ENCODE measurements at regions of chr2 and their contacts with region 1.

Region 1: DNA sequence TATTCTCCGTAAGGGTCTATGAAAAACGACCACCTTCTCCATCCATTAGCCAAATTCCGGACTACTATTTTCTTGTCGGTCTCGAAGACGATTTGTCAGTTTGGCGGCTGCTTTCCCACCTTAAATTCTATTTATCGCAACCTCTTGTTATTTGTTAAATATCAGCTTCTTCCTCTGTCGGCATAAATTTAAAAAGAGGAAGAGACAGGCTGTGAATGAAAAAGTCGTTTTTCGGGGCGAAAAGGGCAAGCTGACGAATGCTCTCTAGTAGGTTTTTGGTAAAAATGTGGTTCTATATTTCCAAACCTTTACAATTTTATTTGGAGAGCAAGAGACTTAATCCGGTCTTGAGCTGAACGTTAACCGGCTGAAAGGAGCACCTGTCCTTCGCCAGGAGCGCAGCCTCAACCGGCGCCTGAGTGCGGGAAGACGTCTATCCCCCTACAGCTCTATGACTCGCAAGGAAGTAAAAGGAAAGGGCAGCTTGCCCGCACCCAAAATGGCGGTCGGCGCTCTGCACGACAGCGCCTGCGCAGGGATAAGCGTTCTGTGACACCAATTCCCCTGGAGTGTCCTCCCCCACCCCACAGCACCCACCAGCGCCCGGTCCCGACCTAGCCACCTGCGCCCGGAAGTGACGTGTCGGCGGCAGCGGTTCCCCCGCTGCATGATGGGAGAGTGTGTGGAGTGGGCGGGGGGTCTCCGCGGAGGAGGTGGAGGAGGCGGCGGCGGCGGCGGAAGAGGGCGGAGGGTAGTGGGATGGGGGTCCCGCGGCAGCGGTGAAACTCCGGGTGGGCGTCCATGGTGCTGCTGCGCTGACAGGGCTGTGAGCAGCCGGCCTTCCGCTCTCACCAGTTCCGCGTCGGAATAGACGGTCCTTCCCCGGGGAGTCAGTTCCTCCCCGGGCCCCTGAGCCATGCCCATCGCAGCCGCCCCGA is at the start of gene AFTPH:
- DNase-seq: peak; percentile 100
- H3K4me3 Mint-ChIP-seq: peak within 1 kb of the TSS; percentile 99
- H3K27ac Mint-ChIP-seq: peak within 1 kb of the TSS; percentile 100
- H3K4me1 Mint-ChIP-seq: peaks cover 39% of the 10 kb centered on the region
- H3K27me3 Mint-ChIP-seq: peaks cover 2% of the 10 kb centered on the region
- total RNA-seq, gene AFTPH: 42.4 and 43.4 TPM in 2 replicates

Region 2: DNA sequence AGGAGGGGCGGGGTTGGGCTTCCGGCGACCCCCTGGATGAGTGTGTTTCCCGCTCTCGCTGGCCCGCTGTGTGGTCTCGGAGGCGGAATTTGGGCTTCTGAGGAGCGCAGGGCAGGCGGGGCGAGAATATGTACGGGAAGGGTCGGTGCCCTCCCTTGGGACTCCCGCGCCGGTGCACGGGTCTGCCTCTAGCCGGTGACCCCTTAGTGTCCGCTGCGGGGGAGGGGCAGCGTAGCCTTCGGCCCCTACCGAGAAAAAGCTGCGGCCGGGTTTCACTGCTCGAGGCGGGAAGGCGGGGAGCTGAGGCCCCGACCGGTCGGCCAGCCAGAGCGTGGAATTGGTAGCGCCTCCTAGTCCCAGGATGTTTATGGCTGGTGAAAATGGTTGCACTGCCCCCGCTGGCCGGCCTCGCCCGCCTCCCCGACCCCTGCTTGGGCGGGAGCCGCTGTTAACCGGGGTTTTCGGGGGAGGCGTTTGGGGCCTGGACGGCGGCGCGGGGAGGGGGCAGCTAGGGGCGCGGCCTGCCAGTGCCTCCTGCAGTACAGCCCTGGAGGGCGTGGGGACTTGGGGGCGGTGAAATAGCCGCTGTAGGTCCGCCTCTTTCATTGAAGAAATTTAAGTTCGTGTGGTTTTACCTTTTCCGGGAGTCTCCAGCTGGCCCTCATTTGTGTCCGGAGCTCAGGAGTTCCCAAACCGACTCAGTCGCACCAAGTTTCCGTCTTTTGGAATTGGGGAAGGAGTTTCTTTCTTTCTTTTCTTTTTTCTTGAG is 682.5 kb before region 1 on chr2 and contains the start of gene UGP2:
- intact Hi-C with region 1: loop called (anchors 2 kb)
- DNase-seq: peak; percentile 83
- H3K4me3 Mint-ChIP-seq: peak within 1 kb of the TSS; percentile 99
- H3K27ac Mint-ChIP-seq: peak within 1 kb of the TSS; percentile 99
- H3K4me1 Mint-ChIP-seq: peaks cover 47% of the 10 kb centered on the region
- H3K27me3 Mint-ChIP-seq: no peaks in the 10 kb centered on the region
- total RNA-seq, gene UGP2: 60.3 and 65.9 TPM in 2 replicates

Region 3: DNA sequence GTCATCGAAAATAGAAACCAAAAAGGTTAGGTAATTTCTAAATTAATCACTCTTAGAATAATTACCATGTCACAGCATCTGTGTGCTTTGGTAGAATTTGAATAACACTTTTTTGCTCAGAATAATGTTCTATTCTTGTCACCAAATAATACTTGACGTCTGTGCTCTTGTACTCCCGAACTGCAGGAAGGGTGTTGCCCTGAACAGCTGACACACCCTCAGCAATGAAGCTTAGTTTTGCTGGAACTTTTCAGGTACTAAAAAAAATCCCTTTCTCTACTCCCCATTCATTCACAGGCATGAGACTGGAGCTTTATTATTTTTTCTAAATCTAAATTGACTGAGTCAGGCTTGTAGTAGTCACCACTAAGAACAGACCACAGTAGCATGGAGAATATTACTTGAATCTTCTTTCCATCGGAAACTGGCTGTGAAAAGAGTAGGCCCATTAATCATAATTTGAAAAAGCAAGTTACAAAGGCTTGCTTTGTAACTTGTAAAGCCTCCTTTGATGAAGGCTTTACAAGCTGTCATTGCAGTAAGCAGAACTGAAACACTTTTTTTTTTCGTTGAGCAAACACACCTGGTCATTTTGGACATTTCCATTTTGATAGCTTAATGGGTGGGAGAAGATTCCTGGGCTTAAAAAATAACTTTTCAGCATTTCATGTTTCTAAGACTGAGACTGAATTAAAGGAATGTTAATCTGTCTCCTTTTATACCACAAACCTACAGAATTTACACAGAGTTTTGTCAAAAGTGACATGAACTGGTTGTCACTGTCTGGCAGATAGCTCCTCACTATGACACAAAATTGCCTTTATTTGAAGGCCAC is 309.4 kb before region 1 on chr2:
- intact Hi-C with region 1: loop called (anchors 2 kb)
- DNase-seq: peak; percentile 33
- H3K4me3 Mint-ChIP-seq: peak overlapping the region; percentile 58
- H3K27ac Mint-ChIP-seq: peak overlapping the region; percentile 98
- H3K4me1 Mint-ChIP-seq: peaks cover 66% of the 10 kb centered on the region
- H3K27me3 Mint-ChIP-seq: no peaks in the 10 kb centered on the region

Region 4: GRCh38 chr2:64488050-64488974 is 35.6 kb before region 1 on chr2:
- intact Hi-C with region 1: no loop called
- DNase-seq: peak; percentile 53
- H3K4me3 Mint-ChIP-seq: no peak overlapping the region
- H3K27ac Mint-ChIP-seq: no peak overlapping the region
- H3K4me1 Mint-ChIP-seq: peaks cover 8% of the 10 kb centered on the region
- H3K27me3 Mint-ChIP-seq: peaks cover 24% of the 10 kb centered on the region

Region 5: GRCh38 chr2:64609227-64609941 is 85.4 kb after region 1 on chr2:
- intact Hi-C with region 1: loop called (anchors 1 kb)
- DNase-seq: peak; percentile 67
- H3K4me3 Mint-ChIP-seq: peak overlapping the region; percentile 68
- H3K27ac Mint-ChIP-seq: peak overlapping the region; percentile 29
- H3K4me1 Mint-ChIP-seq: peaks cover 28% of the 10 kb centered on the region
- H3K27me3 Mint-ChIP-seq: peaks cover 11% of the 10 kb centered on the region

Region 6: DNA sequence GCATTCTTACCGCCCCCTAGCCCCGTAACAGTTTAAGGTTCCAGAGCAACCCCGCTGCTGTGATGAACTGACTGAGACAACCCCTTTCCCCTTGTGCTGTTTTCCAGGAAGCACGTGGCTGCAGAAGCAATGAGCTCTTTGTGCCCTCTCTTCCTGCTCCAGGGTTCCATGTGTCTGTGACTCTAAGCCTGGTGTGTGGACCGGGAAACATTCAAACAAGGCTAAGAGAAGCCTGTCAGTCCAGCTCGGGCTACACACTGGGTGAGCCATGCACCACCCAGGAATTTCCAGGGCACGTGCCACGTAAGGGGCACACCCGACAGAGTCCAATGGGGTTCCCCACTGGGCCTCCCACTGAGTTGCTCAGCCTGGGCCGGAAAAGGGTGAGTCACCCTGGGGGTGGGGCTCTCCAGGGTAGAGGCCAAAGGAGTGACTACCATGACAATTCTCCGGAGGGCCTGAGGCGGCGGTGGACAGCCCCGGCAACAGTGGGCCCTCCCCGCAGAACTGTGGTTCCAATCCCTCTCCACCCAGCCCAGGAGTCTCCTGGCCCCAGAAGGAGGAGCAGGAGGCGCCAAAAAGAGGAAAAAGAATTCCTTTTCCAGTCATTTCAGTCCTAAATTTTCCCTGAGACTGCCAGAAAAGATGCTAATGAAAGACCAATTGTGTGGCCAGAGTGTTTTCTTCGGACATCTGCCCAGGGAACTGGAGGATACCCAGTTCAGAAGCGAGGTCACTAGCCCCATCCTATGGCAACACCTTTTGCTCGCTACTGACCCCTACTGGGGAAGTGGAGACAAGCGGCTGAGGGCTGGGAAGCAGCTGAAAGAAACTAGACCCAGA is 307.4 kb after region 1 on chr2:
- intact Hi-C with region 1: loop called (anchors 1 kb)
- DNase-seq: peak; percentile 73
- H3K4me3 Mint-ChIP-seq: no peak overlapping the region
- H3K27ac Mint-ChIP-seq: peak overlapping the region; percentile 73
- H3K4me1 Mint-ChIP-seq: peaks cover 31% of the 10 kb centered on the region
- H3K27me3 Mint-ChIP-seq: peaks cover 1% of the 10 kb centered on the region

Region 7: DNA sequence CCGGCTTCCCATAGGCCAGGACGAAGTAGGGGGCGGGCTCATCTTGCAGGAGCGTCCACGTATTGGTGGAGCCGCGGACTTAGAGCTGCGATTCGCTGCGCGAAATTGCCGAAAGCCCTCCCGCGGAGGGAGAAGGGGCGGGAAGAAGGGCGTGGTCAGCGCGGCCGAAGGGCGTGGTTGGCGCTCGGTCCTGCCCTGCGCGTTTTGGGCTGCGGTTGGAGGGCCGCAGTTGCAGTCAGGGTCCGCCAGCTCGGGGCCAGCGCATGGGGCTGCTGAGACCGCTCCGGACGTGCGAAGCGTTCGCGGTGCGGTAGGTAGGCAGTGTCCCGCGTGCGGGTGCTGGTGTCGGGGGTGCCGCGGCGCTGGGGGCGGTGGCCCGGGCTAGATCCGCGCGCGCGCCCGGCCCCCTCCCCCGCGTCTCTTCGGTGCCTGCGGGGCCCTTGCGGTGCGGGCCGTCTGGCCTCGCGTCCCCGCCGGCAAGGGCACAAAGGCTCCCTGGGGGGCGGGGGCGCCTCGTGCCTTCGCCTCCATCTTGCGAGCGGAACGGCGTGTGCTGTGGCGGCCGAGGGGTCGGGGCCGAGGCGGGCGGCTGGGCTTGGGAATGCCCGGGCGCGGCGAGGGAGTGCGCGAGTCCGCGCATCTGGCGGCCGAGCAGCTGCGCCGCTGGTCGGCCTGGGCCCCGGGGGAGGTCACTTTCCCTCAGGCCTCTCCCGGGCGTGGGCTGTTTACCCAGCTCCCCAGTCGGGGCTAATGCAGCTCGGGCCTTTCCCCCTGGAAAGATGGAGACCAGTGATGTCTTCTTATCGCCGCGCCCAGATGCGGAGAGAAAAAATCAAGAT is 532.5 kb after region 1 on chr2 and contains the start of gene CEP68:
- intact Hi-C with region 1: loop called (anchors 1 kb)
- DNase-seq: peak; percentile 96
- H3K4me3 Mint-ChIP-seq: peak within 1 kb of the TSS; percentile 94
- H3K27ac Mint-ChIP-seq: peak within 1 kb of the TSS; percentile 84
- H3K4me1 Mint-ChIP-seq: peaks cover 48% of the 10 kb centered on the region
- H3K27me3 Mint-ChIP-seq: peaks cover 6% of the 10 kb centered on the region
- total RNA-seq, gene CEP68: 4.0 and 5.5 TPM in 2 replicates

Measured in activated T-helper 1 cell treated with anti-CD3 and anti-CD28 coated beads, Interleukin-12 subunit alpha, Interleukin-12 subunit beta, Interleukin-2, Interleukin-4 antibody, amounts not matched to agents 30 ng/mL and 10 ng/mL and 1 ng/mL, durations not matched to agents 14 hours and 24 hours and 36 hours (primary cell).